GM10248 (cell line): ENCODE measurements at regions of chr21 and their contacts with region 1.

Region 1: GRCh38 chr21:42579456-42580075 is 65.9 kb downstream of the SLC37A1 start:
- DNase-seq: no peak
- CTCF ChIP-seq: no peak

Region 2: GRCh38 chr21:42548687-42549406 is 30.7 kb before region 1 on chr21:
- CTCF ChIA-PET with region 1: no interaction called
- POLR2A ChIA-PET with region 1: no interaction called
- DNase-seq: peak; percentile 48
- CTCF ChIP-seq: no peak

Region 3: GRCh38 chr21:42563686-42564085 is 15.9 kb before region 1 on chr21:
- CTCF ChIA-PET with region 1: interaction called, 10 read pairs
- POLR2A ChIA-PET with region 1: no interaction called
- DNase-seq: no peak
- CTCF ChIP-seq: no peak

Region 4: GRCh38 chr21:42837421-42838211 is 258.1 kb after region 1 on chr21:
- CTCF ChIA-PET with region 1: no interaction called
- POLR2A ChIA-PET with region 1: no interaction called
- DNase-seq: peak; percentile 20
- CTCF ChIP-seq: no peak